HCT116 (cell line): ENCODE measurements at regions of chr7 and their contacts with region 1.

Region 1: DNA sequence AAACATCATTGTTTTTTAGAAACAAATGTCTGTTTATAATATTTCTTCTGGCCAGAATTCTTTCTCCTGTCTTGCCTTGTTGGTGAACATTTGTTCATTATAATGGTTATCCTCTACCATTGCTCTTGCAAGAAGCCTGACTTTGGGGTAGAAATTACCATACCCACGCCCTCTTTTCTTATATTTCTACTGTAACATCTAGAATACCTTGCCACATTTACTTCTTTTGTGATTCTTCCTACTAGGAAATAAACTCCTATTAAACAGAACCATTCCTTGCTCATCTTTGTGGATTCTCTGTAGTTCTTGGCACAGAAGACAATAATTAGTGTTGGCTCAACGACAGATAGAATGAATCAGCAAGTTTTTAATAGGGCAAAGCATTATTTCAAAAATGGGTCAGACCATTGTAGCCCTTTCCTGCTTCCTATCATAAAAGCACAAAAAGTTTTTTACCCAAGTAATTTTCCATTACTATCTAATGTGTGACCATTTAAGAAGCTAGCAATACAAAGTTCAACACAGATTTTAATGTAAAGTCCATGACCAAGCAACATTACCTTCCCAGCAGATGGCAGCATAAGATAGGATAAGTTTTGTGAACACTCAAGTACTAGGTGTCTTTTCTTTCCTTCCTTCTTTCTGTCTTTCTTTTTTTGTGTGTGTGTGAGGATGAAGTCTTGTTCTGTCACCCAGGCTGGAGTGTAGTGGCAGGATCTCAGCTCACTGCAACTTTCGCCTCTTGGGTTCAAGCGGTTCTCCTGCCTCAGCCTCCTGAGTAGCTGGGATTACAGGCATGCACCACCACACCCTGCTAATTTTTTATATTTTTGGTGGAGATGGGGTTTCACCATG is 270.4 kb downstream of the HGF start:
- DNase-seq: peak; percentile 81
- ATAC-seq: peak; percentile 83
- H3K4me3 ChIP-seq: no peak overlapping the region
- H3K27ac ChIP-seq: no peak overlapping the region
- H3K4me1 ChIP-seq: peaks cover 0 to 5% of the 10 kb centered on the region in 2 experiments; a peak in 1 of 4 replicates
- H3K27me3 ChIP-seq: no peaks in the 10 kb centered on the region
- CTCF ChIP-seq: peak; percentile 36 to 62 (median 60); a peak in 4 of 6 replicates
- POLR2A ChIP-seq: no peak
- RAD21 ChIP-seq: peak; percentile 85

Region 2: GRCh38 chr7:81715984-81716588 is 216.6 kb after region 1 on chr7:
- CTCF ChIA-PET with region 1: interaction called, 10 read pairs
- POLR2A ChIA-PET with region 1: no interaction called
- RAD21 ChIA-PET with region 1: no interaction called
- intact Hi-C with region 1: loop called (anchors 1 kb)
- DNase-seq: peak; percentile 60
- ATAC-seq: peak; percentile 93
- H3K4me3 ChIP-seq: no peak overlapping the region
- H3K27ac ChIP-seq: no peak overlapping the region
- H3K4me1 ChIP-seq: no peaks in the 10 kb centered on the region
- H3K27me3 ChIP-seq: no peaks in the 10 kb centered on the region
- CTCF ChIP-seq: peak; percentile 48 to 80 (median 67); a peak in 4 of 6 replicates
- POLR2A ChIP-seq: no peak
- RAD21 ChIP-seq: peak; percentile 84

Region 3: DNA sequence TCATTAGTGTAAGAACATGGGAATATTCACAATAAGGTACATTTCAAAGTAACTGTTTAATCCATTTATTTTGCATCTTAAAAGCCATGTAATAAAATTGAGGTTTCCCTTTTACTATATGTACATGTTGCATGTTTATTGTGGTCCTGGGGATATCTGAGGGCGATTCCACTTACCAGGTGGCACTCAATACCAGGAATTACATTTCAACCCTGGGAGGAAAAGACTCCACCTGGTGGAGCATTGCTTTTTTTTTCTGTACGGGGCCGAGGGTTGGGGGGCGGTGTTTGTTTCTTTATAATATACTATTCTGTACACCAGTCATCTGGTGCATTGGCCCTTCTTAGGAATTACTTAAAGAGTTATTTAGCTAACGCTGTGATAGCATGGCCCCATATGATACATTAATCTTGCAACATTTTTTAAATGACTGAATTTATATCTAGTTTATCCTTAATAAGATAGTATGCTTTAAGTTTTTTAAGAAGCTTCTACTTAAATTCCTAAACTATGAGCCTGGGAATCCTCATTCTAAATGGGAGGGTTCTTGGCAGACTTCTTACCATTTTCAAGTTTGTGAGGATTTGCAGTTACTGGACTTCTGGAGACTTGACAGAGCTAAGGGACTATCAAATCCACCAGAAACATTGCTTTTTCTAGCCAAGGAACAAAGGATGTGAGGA is 277.6 kb after region 1 on chr7:
- CTCF ChIA-PET with region 1: interaction called, 5 read pairs
- POLR2A ChIA-PET with region 1: no interaction called
- RAD21 ChIA-PET with region 1: interaction called in 1 of 2 experiments, 3 read pairs
- intact Hi-C with region 1: loop called (anchors 1 kb)
- DNase-seq: peak; percentile 8
- ATAC-seq: peak; percentile 90
- H3K4me3 ChIP-seq: no peak overlapping the region
- H3K27ac ChIP-seq: no peak overlapping the region
- H3K4me1 ChIP-seq: no peaks in the 10 kb centered on the region
- H3K27me3 ChIP-seq: no peaks in the 10 kb centered on the region
- CTCF ChIP-seq: peak; percentile 61 to 83 (median 64)
- POLR2A ChIP-seq: no peak
- RAD21 ChIP-seq: peak; percentile 54

Region 4: DNA sequence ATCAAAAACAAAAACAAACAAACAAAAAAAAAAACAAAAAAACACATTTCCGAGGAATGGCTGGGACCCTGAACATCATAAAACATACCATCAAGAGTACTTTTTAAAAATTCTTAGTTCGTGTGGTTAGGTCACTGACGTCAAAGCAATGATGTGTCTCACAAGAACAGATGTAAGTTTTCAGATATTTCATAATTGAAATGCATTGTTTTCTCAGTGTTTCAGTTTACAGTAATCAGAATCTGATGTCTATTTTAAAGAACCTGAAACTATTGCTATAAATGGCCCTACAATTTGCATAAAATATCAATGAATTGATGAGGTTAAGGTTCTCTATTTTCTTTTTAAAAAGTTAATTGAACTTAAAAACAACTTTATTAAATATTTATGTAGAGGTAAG is 374.1 kb after region 1 on chr7:
- CTCF ChIA-PET with region 1: no interaction called
- POLR2A ChIA-PET with region 1: no interaction called
- RAD21 ChIA-PET with region 1: no interaction called
- intact Hi-C with region 1: no loop called
- DNase-seq: no peak
- ATAC-seq: no peak
- H3K4me3 ChIP-seq: no peak overlapping the region
- H3K27ac ChIP-seq: no peak overlapping the region
- H3K4me1 ChIP-seq: no peaks in the 10 kb centered on the region
- H3K27me3 ChIP-seq: no peaks in the 10 kb centered on the region
- CTCF ChIP-seq: no peak
- POLR2A ChIP-seq: no peak
- RAD21 ChIP-seq: no peak

Region 5: DNA sequence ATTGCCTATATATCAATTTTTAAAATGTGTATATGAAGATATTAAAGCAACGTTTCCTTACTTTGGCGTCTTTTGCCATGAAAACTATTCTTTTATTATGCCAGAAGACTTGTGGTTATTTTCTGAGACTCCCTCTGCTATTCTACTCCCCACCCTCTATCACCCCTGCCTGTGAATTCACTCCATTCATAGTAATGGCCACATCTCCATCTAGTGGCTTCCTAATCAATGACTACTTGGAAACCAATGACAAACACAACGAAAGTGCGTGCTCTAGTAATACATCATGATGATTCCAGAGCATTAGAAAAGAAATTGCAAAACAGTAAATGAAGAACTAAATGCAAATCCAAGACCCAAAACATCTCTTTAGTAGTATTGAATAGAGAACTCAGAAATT is 457.0 kb after region 1 on chr7:
- CTCF ChIA-PET with region 1: interaction called, 34 read pairs
- POLR2A ChIA-PET with region 1: no interaction called
- RAD21 ChIA-PET with region 1: interaction called in 1 of 2 experiments, 3 read pairs
- intact Hi-C with region 1: loop called (anchors 1 kb)
- DNase-seq: peak; percentile 47
- ATAC-seq: peak; percentile 96
- H3K4me3 ChIP-seq: no peak overlapping the region
- H3K27ac ChIP-seq: no peak overlapping the region
- H3K4me1 ChIP-seq: no peaks in the 10 kb centered on the region
- H3K27me3 ChIP-seq: no peaks in the 10 kb centered on the region
- CTCF ChIP-seq: peak; percentile 61 to 75 (median 70)
- POLR2A ChIP-seq: no peak
- RAD21 ChIP-seq: peak; percentile 80

Region 6: GRCh38 chr7:82572195-82572880 is 1072.8 kb after region 1 on chr7:
- CTCF ChIA-PET with region 1: no interaction called
- POLR2A ChIA-PET with region 1: no interaction called
- RAD21 ChIA-PET with region 1: no interaction called
- intact Hi-C with region 1: loop called (anchors 2 kb)
- DNase-seq: peak; percentile 76
- ATAC-seq: peak; percentile 97
- H3K4me3 ChIP-seq: no peak overlapping the region
- H3K27ac ChIP-seq: no peak overlapping the region
- H3K4me1 ChIP-seq: peaks cover 0 to 8% of the 10 kb centered on the region in 2 experiments; a peak in 1 of 4 replicates
- H3K27me3 ChIP-seq: no peaks in the 10 kb centered on the region
- CTCF ChIP-seq: peak; percentile 79 to 92 (median 90)
- POLR2A ChIP-seq: no peak
- RAD21 ChIP-seq: peak; percentile 90